SK-N-SH (cell line): ENCODE measurements at regions of chr20 and their contacts with region 1.

Region 1: GRCh38 chr20:44888226-44889103 is 3.0 kb downstream of the YWHAB start:
- DNase-seq: peak; percentile 25
- H3K4me3 ChIP-seq: peak overlapping the region in 1 of 2 experiments; percentile 90; a peak in 2 of 4 replicates
- H3K27ac ChIP-seq: no peak overlapping the region; a peak in 1 of 4 replicates
- H3K4me1 ChIP-seq: peaks cover 14 to 19% of the 10 kb centered on the region in 2 experiments; a peak in 3 of 4 replicates
- H3K27me3 ChIP-seq: no peaks in the 10 kb centered on the region
- CTCF ChIP-seq: peak; percentile 44
- EP300 ChIP-seq: no peak
- RAD21 ChIP-seq: no peak

Region 2: DNA sequence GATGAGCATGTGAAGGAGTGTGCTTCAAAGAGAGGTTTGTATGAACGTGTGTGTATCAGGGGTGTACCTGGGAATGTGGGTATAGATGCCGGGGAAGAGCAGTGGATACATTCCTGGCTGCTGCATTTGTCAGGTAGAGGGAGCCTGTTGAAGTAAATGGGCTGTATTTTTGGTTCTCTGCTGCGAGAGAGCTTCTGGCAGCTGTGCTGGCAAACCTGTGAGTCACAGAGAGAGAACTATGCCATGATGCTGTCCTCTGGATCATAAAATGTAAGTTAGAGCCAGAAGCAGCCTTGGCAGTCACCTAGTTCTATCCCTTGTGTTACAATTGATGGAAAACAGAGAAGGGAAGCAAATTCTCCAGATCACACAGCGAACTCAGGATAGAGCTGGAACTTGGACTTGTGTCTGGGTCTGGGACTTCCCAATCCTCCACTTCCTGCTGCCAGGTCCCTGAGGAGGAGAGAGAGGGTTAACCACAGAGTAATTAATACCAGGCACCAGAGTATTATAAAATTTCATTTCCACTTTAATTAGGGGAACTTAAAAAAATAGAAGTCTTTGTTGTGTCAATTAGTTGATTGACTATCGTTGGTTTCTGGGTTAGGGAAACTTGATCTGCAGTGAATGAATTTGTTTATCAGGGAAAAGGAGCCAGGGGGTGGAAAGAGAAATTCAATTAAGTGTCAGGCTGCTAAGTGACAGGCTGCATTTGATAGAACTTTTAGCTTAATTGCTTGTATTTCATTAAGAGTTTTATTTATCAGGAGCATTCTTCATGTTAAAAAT is 1120.6 kb before region 1 on chr20:
- CTCF ChIA-PET with region 1: no interaction called
- POLR2A ChIA-PET with region 1: no interaction called
- DNase-seq: peak; percentile 50
- H3K4me3 ChIP-seq: no peak overlapping the region
- H3K27ac ChIP-seq: no peak overlapping the region
- H3K4me1 ChIP-seq: peaks cover 0 to 14% of the 10 kb centered on the region in 2 experiments; a peak in 2 of 4 replicates
- H3K27me3 ChIP-seq: no peaks in the 10 kb centered on the region; the same call in 1 of the 2 replicates
- CTCF ChIP-seq: 0 out of 2 replicates have a peak, but pooled peaks have one; percentile 6
- EP300 ChIP-seq: no peak
- RAD21 ChIP-seq: no peak

Region 3: GRCh38 chr20:44856856-44857448 is 31.5 kb before region 1 on chr20:
- CTCF ChIA-PET with region 1: no interaction called
- POLR2A ChIA-PET with region 1: no interaction called
- DNase-seq: no peak
- H3K4me3 ChIP-seq: no peak overlapping the region
- H3K27ac ChIP-seq: no peak overlapping the region
- H3K4me1 ChIP-seq: peaks cover 0 to 2% of the 10 kb centered on the region in 2 experiments; a peak in 1 of 4 replicates
- H3K27me3 ChIP-seq: no peaks in the 10 kb centered on the region; the same call in 1 of the 2 replicates
- CTCF ChIP-seq: no peak
- EP300 ChIP-seq: no peak
- RAD21 ChIP-seq: no peak

Region 4: DNA sequence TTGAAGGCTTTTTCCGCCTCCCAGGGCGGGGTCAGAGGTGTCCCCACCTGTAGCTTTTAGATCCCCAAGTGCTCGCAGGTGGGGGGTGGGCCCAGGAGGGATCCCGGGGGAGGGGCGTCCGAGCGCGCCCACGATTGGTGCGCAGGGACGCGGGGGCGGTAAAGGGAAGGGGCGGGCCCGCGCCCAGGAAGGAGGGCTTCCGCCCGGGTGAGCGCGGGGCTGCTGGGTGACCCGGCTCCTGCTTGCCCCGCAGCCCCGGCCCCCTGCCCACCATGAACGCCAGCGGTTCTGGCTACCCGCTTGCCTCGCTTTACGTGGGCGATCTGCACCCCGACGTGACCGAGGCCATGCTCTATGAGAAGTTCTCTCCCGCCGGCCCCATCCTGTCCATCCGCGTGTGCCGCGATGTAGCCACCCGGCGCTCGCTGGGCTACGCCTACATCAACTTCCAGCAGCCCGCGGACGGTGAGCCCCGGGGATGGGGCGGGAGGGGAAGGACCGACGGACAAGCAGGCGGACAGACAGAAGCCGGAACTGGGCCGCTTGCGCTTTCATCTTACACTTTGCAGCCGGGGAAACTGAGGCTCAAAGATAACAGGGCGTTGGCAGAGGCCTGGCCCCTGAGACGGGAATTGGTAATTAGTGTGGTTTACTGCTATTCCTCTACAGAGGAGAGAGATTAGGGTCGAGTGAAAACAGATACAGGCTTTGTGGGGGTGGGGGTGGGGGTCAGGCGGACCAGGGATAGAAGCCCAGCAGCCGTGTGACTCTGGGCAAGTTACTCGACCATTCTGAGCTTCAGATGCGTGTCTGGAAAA is 21.6 kb after region 1 on chr20 and contains the start of gene PABPC1L:
- CTCF ChIA-PET with region 1: interaction called, 11 read pairs
- POLR2A ChIA-PET with region 1: no interaction called
- DNase-seq: peak; percentile 93
- H3K4me3 ChIP-seq: peak within 1 kb of the TSS; percentile 72 to 87
- H3K27ac ChIP-seq: peak within 1 kb of the TSS; percentile 26 to 65
- H3K4me1 ChIP-seq: peaks cover 0 to 9% of the 10 kb centered on the region in 2 experiments; a peak in 1 of 4 replicates
- H3K27me3 ChIP-seq: no peaks in the 10 kb centered on the region
- CTCF ChIP-seq: no peak
- EP300 ChIP-seq: no peak
- RAD21 ChIP-seq: no peak
- polyA plus RNA-seq, gene PABPC1L: 205 and 251 TPM in 2 replicates

Region 5: DNA sequence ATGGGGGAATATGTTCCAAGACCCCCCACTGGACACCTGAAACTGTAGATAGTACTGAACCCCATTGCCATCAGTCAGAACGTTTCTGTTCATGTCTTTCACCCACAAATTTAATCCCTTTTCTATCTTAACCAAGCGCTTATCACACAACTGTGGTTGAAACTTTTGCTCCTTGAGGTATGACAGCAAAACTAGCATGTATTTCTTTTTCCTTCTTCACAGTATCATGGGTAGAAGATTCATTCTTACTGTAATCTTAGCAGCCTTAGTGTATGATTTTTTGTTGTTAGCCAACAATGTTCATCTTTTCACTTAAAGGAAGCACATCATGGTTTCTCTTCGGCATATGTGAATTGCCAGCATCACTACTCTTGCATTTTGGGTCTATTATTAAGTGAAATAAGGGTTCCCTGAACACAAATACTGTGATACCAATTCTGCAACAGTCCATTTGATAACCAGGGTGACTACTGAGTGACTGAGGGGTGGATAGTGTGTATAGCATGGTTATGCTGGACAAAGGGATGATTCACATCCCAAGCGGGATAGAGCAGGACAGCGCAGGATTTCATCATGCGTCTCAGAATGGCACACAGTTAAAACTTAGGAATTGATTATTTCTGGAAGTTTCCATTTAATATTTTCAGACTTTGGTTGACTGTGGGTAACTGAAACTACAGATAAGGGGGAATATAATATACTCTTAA is 170.7 kb after region 1 on chr20:
- CTCF ChIA-PET with region 1: no interaction called
- POLR2A ChIA-PET with region 1: no interaction called
- DNase-seq: no peak
- H3K4me3 ChIP-seq: no peak overlapping the region
- H3K27ac ChIP-seq: 0 out of 4 replicates have a peak overlapping the region, but pooled peaks of 1 of the 2 experiments have one; percentile 14
- H3K4me1 ChIP-seq: peaks cover 3 to 14% of the 10 kb centered on the region in 2 experiments; a peak in 3 of 4 replicates
- H3K27me3 ChIP-seq: no peaks in the 10 kb centered on the region
- CTCF ChIP-seq: no peak
- EP300 ChIP-seq: no peak
- RAD21 ChIP-seq: no peak

Region 6: DNA sequence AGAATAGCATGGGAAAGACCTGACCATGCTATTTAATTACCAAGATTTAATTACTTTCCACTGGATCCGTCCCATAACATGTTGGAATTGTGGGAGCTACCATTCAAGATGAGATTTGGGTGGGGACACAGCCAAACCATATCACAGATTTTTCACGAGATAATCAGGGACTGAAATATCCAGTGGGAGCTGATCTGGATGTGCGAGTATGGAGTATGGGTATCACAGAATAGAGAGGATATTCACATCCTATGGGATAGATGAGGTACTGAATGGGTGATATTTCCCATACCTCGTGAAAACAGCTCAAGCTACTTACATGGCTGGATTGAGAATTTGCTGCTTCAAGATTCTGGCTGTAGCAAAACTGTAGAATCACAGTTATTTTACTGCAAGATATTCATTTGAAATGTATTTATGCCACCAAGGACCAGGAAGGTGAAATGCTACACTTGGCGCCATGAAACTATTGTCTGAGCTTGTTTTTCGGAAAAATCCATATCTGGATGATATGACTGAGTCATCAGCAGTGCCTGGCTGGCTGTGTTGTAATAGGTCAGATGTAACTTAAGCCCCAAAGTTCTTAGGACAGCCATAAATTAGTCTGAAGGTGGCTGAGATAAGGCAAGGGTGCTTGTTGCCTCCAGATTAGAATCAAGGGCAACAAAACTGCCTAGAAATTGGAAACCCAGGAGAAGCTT is 182.6 kb after region 1 on chr20:
- CTCF ChIA-PET with region 1: no interaction called
- POLR2A ChIA-PET with region 1: no interaction called
- DNase-seq: no peak
- H3K4me3 ChIP-seq: no peak overlapping the region
- H3K27ac ChIP-seq: no peak overlapping the region
- H3K4me1 ChIP-seq: no peaks in the 10 kb centered on the region; a peak in 2 of 4 replicates
- H3K27me3 ChIP-seq: no peaks in the 10 kb centered on the region
- CTCF ChIP-seq: no peak
- EP300 ChIP-seq: peak in 1 of 2 experiments; percentile 75; a peak in 1 of 4 replicates
- RAD21 ChIP-seq: no peak